Activated T-helper 1 cell treated with anti-CD3 and anti-CD28 coated beads, Interleukin-12 subunit alpha, Interleukin-12 subunit beta, Interleukin-2, Interleukin-4 antibody, amounts not matched to agents 30 ng/mL and 10 ng/mL and 1 ng/mL, durations not matched to agents 14 hours and 24 hours and 36 hours (primary cell): ENCODE measurements at regions of chr22 and their contacts with region 1.

Region 1: GRCh38 chr22:28442264-28442710 is 237.4 kb downstream of the TTC28 start:
- DNase-seq: peak; percentile 73
- H3K4me3 Mint-ChIP-seq: peak overlapping the region; percentile 86
- H3K27ac Mint-ChIP-seq: peak overlapping the region; percentile 67
- H3K4me1 Mint-ChIP-seq: peaks cover 25% of the 10 kb centered on the region
- H3K27me3 Mint-ChIP-seq: peaks cover 8% of the 10 kb centered on the region

Region 2: GRCh38 chr22:28019881-28020871 is 422.1 kb before region 1 on chr22:
- intact Hi-C with region 1: loop called (anchors 1 kb)
- DNase-seq: peak; percentile 48
- H3K4me3 Mint-ChIP-seq: no peak overlapping the region
- H3K27ac Mint-ChIP-seq: no peak overlapping the region
- H3K4me1 Mint-ChIP-seq: peaks cover 10% of the 10 kb centered on the region
- H3K27me3 Mint-ChIP-seq: no peaks in the 10 kb centered on the region

Region 3: DNA sequence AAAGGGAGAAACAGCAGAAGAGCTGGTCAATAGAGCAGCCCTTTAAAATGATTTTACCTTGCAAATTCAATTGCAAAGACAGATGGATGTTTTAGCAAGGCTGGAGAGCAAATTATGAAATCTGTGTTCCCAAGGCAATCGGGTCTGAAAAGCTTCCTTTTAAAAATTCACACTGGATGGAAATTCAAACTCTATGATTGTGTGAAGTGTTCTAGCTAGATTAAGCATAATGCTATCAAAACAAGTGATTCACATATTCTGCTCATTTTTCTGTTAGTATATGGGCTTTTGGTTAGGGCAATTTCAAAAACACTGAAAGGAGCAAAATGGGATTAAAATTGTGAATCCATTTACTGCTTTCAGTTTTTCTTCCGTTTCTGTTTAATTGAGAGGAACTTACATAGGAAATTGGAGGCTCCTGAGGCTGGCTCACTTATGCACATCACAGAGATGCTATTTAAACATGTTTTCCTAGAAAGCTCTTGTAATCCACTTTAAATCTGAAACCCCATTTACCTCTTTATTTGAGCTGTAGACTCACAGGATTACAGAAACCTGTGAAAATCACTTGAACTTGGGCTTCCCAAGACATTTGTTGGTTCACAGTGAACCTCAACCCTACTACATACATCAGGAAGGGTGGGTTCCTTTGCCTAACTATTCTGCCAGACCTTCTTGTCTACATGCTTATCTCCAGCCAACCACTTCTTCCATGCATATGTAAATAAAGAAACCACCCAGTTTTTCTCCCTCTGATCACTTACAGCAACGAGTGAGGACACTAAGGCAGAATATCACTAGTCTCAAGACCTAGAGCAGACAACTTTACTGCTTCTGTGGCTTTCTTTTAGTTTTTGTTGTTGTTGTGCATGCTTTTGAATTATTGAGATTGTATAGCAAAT is 321.3 kb before region 1 on chr22:
- intact Hi-C with region 1: loop called (anchors 10 kb)
- DNase-seq: no peak
- H3K4me3 Mint-ChIP-seq: no peak overlapping the region
- H3K27ac Mint-ChIP-seq: no peak overlapping the region
- H3K4me1 Mint-ChIP-seq: no peaks in the 10 kb centered on the region
- H3K27me3 Mint-ChIP-seq: peaks cover 3% of the 10 kb centered on the region

Region 4: GRCh38 chr22:28299753-28300152 is 142.5 kb before region 1 on chr22:
- intact Hi-C with region 1: loop called (anchors 1 kb)
- DNase-seq: peak; percentile 1
- H3K4me3 Mint-ChIP-seq: no peak overlapping the region
- H3K27ac Mint-ChIP-seq: peak overlapping the region; percentile 46
- H3K4me1 Mint-ChIP-seq: peaks cover 24% of the 10 kb centered on the region
- H3K27me3 Mint-ChIP-seq: peaks cover 3% of the 10 kb centered on the region

Region 5: DNA sequence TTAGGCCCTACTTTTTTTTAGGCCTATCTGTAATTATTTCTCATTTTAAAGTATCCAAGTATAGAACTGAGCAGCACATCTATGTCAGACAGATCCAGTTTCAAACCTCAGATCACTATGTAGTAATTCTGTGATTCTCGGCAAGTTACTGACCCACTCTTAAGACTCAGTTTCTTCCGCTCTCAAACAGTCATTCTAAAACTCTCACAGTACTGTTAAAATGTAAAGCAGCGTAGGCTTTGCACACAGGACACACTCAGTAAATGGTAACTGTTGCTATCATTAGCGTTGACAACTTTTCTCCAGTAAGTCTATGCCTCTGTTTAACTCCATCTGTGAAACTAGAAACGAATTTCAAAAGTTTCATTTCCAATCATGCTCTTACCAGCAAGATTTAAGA is 39.7 kb before region 1 on chr22:
- intact Hi-C with region 1: loop called (anchors 2 kb)
- DNase-seq: no peak
- H3K4me3 Mint-ChIP-seq: peak overlapping the region; percentile 9
- H3K27ac Mint-ChIP-seq: peak overlapping the region; percentile 74
- H3K4me1 Mint-ChIP-seq: peaks cover 33% of the 10 kb centered on the region
- H3K27me3 Mint-ChIP-seq: no peaks in the 10 kb centered on the region